Activated T-helper 1 cell treated with anti-CD3 and anti-CD28 coated beads, Interleukin-12 subunit alpha, Interleukin-12 subunit beta, Interleukin-2, Interleukin-4 antibody, amounts not matched to agents 30 ng/mL and 10 ng/mL and 1 ng/mL, durations not matched to agents 14 hours and 24 hours and 36 hours (primary cell): ENCODE measurements at regions of chr3 and their contacts with region 1.

Region 1: GRCh38 chr3:63967675-63968611 is 55.4 kb downstream of the PSMD6 start:
- DNase-seq: peak; percentile 33
- H3K4me3 Mint-ChIP-seq: peak overlapping the region; percentile 81
- H3K27ac Mint-ChIP-seq: peak overlapping the region; percentile 92
- H3K4me1 Mint-ChIP-seq: peaks cover 94% of the 10 kb centered on the region
- H3K27me3 Mint-ChIP-seq: no peaks in the 10 kb centered on the region

Region 2: DNA sequence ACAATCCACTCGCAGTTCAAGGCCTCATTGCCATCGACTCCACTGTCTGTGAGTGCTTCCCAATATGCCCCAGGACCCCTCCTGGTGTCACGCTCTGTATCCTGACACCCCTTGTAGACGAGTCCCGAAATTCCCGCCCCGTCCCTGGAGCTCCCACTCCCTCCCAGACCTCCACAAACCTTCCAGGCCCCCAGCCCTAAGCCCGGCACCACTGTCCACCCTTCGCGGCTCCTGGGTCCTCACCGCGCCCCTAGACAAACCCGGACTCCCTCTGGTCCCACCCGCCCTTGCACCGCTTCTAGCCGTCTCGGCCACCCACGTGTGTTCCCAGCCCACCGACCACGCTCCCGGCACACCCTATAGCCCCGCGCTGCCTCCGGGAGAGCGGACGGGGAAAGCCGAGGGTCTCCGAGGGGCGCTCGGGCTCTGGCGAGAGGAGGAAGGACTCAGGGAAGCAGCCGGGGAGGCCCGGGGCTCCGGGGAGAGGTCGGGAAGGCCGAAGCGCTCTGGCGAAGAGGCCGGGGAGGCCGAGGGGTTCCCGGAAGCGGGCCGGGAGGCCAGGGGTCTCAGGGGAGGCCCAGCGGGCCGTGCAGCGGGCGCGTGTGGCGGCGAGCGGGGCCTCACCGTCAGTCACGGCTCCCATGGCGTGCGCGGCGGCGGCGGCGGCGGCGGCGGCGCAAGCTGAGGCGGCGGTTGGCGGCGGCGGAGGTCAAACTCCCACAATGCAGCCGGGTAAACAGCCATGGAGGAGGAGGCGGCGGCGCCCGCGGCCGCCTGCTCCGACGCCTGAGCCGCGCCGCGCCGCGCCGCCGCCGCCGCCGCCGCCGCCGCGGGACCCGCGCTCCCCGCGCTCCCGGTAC is 104.6 kb before region 1 on chr3 and contains the starts of genes ATXN7 and THOC7:
- intact Hi-C with region 1: loop called (anchors 5 kb)
- DNase-seq: peak; percentile 72
- H3K4me3 Mint-ChIP-seq: peak within 1 kb of the TSS; percentile 91
- H3K27ac Mint-ChIP-seq: peak within 1 kb of the TSS; percentile 94
- H3K4me1 Mint-ChIP-seq: peaks cover 67% of the 10 kb centered on the region
- H3K27me3 Mint-ChIP-seq: no peaks in the 10 kb centered on the region
- total RNA-seq, gene ATXN7: 40.7 and 48.2 TPM in 2 replicates
- total RNA-seq, gene THOC7: 100 and 106 TPM in 2 replicates

Region 3: DNA sequence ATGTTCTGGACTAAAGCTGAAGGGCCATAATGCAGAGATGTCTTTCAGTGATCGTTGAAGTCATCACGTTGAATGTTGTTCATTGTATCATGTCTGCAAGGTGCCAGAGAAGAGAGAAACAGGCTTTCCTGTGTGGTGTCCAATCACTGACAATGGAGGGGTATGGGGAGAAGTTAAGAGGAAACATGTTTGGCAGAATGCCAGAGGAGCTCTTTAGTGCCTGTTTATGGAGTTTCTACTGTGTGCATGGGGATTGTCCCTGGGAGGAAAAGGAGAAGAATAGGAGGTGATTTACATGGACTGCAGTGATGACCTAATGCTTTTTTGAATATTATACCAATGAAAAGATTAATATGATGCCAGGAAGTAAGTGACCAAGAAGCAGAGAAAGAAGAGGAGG is 67.5 kb before region 1 on chr3:
- intact Hi-C with region 1: no loop called
- DNase-seq: no peak
- H3K4me3 Mint-ChIP-seq: no peak overlapping the region
- H3K27ac Mint-ChIP-seq: peak overlapping the region; percentile 32
- H3K4me1 Mint-ChIP-seq: peaks cover 36% of the 10 kb centered on the region
- H3K27me3 Mint-ChIP-seq: no peaks in the 10 kb centered on the region

Region 4: GRCh38 chr3:63951492-63952247 is 16.3 kb before region 1 on chr3:
- intact Hi-C with region 1: loop called (anchors 2 kb)
- DNase-seq: no peak
- H3K4me3 Mint-ChIP-seq: peak overlapping the region; percentile 81
- H3K27ac Mint-ChIP-seq: peak overlapping the region; percentile 70
- H3K4me1 Mint-ChIP-seq: peaks cover 58% of the 10 kb centered on the region
- H3K27me3 Mint-ChIP-seq: no peaks in the 10 kb centered on the region

Region 5: GRCh38 chr3:63979093-63979885 is 11.3 kb after region 1 on chr3:
- intact Hi-C with region 1: loop called (anchors 1 kb)
- DNase-seq: no peak
- H3K4me3 Mint-ChIP-seq: peak overlapping the region; percentile 72
- H3K27ac Mint-ChIP-seq: peak overlapping the region; percentile 84
- H3K4me1 Mint-ChIP-seq: peaks cover 74% of the 10 kb centered on the region
- H3K27me3 Mint-ChIP-seq: no peaks in the 10 kb centered on the region